Astrocyte of the cerebellum (primary cell): ENCODE measurements at regions of chr6 and their contacts with region 1.

Region 1: DNA sequence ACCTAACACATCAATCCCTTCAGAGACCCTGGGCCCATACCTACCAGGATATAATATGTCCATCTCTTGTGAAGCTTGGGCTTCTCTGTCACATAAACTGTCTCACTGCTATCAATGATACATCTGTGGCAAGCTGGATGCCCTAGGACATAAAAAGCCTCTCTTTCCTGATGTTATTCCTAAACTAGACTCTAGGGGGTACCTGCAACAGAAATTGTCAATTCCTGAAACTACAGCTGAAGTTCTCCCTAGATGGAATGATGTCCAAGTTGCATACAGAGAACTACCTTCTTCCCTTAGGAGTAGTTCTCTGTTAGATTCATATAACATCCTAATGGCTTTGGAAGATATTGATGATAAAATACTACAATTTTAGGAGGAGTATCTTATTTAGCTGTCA is 35.8 kb downstream of the TBX18 start:
- DNase-seq: no peak
- H3K4me3 ChIP-seq: no peak overlapping the region
- CTCF ChIP-seq: peak; percentile 29

Region 2: DNA sequence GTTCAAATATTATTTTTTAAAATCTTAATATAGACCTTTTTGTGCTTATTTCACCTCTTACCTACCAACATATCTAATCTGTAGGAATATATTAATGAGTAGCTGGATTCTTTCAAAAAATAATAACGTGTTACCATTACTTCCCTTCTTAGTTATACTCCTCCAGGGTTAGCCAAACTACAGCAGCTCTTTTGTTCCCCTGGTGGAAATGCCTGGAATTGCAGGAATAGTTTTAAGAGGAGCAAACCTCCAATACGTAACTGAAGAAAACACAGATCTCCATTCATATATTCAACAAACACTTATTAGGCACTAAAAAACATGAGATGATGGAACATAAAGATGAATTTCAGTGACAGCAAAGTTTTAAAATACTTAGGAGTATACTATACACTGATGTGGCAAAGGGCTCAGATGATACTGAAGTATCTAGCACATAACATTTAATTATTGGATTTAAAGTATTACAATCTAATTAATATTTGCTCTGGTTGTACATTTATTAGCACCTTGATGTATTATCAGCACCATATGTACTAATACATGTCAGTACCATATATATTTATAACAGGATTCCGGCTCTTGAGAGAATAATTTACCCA is 42.5 kb before region 1 on chr6:
- in situ Hi-C with region 1: loop called (anchors 5 kb)
- DNase-seq: no peak
- H3K4me3 ChIP-seq: no peak overlapping the region
- CTCF ChIP-seq: peak; percentile 38

Region 3: GRCh38 chr6:84779380-84779779 is 50.8 kb after region 1 on chr6:
- in situ Hi-C with region 1: no loop called
- DNase-seq: no peak
- H3K4me3 ChIP-seq: no peak overlapping the region
- CTCF ChIP-seq: peak; percentile 26

Region 4: GRCh38 chr6:84815896-84816735 is 87.5 kb after region 1 on chr6:
- in situ Hi-C with region 1: no loop called
- DNase-seq: no peak
- H3K4me3 ChIP-seq: no peak overlapping the region
- CTCF ChIP-seq: no peak